Esophagus muscularis mucosa (tissue), 4 donors: ENCODE measurements at regions of chr12 and their contacts with region 1.

Region 1: DNA sequence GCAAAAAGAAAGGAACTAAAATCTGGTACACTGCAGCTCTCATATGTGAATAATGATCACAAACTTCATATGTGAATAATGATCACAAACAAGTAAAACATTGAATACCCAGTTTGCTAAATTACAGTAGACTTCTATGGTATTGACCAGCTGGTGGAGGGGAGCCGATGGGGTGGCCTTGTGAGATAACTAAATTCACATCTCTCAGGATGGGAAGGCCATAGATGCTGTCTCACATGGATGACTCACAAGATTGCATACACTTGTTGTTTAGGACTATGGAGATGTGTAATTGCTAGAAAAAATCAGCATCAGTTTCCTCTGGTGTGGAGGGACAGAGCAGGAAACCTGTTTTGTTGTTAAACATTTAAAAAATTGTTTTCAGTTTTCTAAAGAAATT is 49.2 kb downstream of the ACACB start:
- DNase-seq: no peak
- H3K4me3 ChIP-seq: no peak overlapping the region
- H3K27ac ChIP-seq: peak overlapping the region; percentile 16 to 96 (median 90)
- H3K4me1 ChIP-seq: peaks cover 37 to 96% (median 89%) of the 10 kb centered on the region in 4 donors
- H3K27me3 ChIP-seq: no peaks in the 10 kb centered on the region
- CTCF ChIP-seq: no peak
- EP300 ChIP-seq: no peak
- POLR2A ChIP-seq: no peak

Region 2: GRCh38 chr12:108666401-108666881 is 499.2 kb before region 1 on chr12:
- intact Hi-C with region 1: no loop called
- DNase-seq: no peak
- H3K4me3 ChIP-seq: no peak overlapping the region
- H3K27ac ChIP-seq: peak overlapping the region; percentile 83 to 90 (median 84)
- H3K4me1 ChIP-seq: peaks cover 59 to 85% (median 80%) of the 10 kb centered on the region in 4 donors
- H3K27me3 ChIP-seq: no peaks in the 10 kb centered on the region
- CTCF ChIP-seq: no peak
- EP300 ChIP-seq: no peak
- POLR2A ChIP-seq: no peak

Region 3: DNA sequence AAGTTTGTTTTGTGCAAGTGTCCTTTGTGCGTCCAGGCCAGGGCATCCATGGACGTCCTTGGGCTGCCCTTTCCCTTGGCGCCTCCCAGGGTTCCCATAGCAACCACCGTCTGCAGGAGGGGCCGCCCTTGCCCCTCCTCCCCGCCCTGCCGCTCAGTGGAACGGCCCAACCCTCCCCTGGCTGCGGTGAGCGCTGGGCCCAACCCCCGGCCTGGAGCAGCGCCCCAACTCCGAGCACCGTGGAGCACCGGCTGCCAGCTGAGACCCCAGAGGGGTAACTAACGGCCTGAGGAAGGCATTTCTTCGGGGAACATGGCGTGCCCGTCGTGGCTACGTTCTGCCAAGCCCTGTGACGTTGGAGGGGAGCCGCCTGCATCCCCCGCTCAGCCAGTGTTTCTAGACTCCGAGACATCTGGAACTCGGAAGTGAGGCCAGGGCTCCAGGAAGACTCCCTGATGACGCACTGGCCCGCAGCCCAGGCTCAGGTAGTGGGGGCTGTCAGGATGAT is 54.6 kb before region 1 on chr12:
- intact Hi-C with region 1: loop called (anchors 5 kb)
- DNase-seq: peak; percentile 97
- H3K4me3 ChIP-seq: peak overlapping the region; percentile 59 to 82 (median 62)
- H3K27ac ChIP-seq: peak overlapping the region; percentile 82 to 96 (median 90)
- H3K4me1 ChIP-seq: peaks cover 48 to 60% (median 55%) of the 10 kb centered on the region in 4 donors
- H3K27me3 ChIP-seq: no peaks in the 10 kb centered on the region
- CTCF ChIP-seq: no peak
- EP300 ChIP-seq: peak; percentile 87
- POLR2A ChIP-seq: no peak

Region 4: DNA sequence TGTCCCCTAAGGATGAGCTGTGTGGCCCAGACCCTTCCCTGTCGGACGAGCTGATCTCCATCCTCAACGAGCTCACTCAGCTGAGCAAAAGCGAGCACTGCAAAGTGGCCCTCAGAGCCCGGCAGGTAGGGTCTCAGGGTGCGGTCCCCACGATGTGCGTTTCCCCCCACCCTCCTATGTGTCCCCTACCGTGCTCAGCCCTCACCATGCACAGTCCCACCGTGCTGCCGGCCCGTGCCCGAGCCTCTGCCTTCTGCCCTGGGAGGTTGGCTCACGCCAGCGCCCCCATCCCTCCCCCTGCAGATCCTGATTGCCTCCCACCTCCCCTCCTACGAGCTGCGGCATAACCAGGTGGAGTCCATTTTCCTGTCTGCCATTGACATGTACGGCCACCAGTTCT is 56.9 kb after region 1 on chr12:
- intact Hi-C with region 1: no loop called
- DNase-seq: no peak
- H3K4me3 ChIP-seq: no peak overlapping the region
- H3K27ac ChIP-seq: no peak overlapping the region
- H3K4me1 ChIP-seq: no peaks in the 10 kb centered on the region
- H3K27me3 ChIP-seq: no peaks in the 10 kb centered on the region
- CTCF ChIP-seq: no peak
- EP300 ChIP-seq: no peak
- POLR2A ChIP-seq: no peak